Activated CD4-positive, alpha-beta T cell treated with anti-CD3 and anti-CD28 coated beads, Interleukin-2, amount 10 ng/mL, durations not matched to agents 7 days and 5 days (primary cell): ENCODE measurements at regions of chr11 and their contacts with region 1.

Region 1: DNA sequence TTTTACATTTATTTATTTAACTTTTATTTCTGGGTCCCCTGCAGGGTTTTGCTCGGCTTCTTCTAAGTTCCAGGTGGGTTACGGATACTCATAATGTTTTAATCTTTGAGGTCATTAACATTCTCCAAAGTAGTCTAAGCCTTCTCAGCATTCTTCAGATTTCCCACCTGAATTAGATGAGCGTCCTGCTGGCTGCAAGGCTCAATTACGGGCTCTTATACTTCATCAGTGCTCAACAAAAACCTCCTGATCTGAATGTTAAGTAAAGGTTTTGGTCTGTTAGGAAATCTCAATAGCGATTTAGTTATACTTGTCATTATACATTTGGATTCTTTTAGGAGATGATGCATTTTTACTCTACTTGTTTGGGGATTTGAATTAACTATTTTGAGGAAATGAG is 27.3 kb upstream of the NFRKB start:
- DNase-seq: no peak
- H3K4me3 Mint-ChIP-seq: no peak overlapping the region
- H3K27ac Mint-ChIP-seq: no peak overlapping the region
- H3K4me1 Mint-ChIP-seq: peaks cover 23% of the 10 kb centered on the region
- H3K27me3 Mint-ChIP-seq: no peaks in the 10 kb centered on the region

Region 2: DNA sequence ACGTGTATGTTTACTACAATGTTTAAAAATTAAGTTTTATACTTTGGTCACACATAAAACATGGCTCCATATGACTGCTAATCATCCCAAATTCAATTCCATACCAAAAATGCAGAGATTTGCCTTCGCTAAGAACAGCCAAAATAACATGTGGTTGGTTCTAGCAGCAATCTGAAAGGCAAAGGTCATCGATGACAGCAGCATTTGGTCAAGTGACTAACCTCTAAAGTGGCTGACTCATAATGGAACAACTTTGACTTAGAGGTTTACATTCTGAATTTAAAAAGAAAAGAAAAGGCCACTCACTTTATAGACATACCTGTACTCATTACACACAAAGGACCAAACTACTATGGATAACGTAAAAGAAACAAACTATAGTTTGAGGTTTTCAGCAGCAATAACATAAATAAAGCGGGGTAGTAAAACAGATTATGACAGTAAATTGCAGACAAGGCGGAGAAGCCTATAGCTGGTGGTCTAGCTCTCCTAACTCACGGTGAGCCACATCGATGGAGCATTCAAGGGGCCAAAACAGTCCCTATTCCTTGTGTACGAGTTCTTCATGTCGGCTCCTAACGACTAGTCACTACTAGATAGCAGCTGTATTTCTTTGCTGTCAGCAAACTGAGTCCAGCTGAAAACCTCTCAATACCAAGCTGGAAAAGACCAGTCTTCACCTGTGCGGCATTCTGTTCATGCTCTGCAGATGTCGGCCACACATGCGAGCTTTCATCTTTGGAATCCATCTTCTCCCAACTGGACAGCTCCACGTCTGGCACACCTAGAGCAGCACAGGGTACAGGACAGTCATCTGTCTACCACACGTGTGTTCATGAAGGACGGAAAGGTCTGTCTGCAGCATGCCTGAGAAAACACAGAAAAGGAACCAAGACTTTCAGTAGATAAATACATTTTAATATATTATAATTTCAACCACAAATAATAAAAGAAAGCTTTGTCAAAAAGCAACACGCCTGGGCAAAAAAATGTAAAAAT is 37.8 kb after region 1 on chr11:
- CTCF ChIA-PET with region 1: no interaction called
- POLR2A ChIA-PET with region 1: no interaction called
- DNase-seq: no peak
- H3K4me3 Mint-ChIP-seq: no peak overlapping the region
- H3K27ac Mint-ChIP-seq: no peak overlapping the region
- H3K4me1 Mint-ChIP-seq: peaks cover 11% of the 10 kb centered on the region
- H3K27me3 Mint-ChIP-seq: no peaks in the 10 kb centered on the region

Region 3: DNA sequence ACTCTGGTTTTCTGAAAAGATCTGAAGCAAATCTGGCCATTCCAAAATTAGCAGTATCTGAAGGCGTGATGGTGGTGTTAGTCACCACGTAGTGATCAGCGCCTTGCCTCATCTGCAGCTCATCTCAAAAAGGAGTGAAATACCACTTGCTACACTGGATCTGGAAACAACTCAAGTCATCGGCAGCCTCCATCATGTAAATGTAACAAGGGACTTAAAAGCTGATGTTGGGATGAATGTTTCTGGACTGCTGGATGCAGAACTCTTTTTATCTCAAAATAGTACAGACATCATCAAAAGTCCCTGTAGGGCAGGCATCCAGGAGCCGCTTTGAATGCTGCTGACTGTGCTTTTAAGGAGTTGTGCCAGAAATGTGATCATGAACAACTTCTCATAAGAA is 132.9 kb after region 1 on chr11:
- CTCF ChIA-PET with region 1: no interaction called
- POLR2A ChIA-PET with region 1: no interaction called
- DNase-seq: no peak
- H3K4me3 Mint-ChIP-seq: no peak overlapping the region
- H3K27ac Mint-ChIP-seq: no peak overlapping the region
- H3K4me1 Mint-ChIP-seq: no peaks in the 10 kb centered on the region
- H3K27me3 Mint-ChIP-seq: peaks cover 32% of the 10 kb centered on the region

Region 4: DNA sequence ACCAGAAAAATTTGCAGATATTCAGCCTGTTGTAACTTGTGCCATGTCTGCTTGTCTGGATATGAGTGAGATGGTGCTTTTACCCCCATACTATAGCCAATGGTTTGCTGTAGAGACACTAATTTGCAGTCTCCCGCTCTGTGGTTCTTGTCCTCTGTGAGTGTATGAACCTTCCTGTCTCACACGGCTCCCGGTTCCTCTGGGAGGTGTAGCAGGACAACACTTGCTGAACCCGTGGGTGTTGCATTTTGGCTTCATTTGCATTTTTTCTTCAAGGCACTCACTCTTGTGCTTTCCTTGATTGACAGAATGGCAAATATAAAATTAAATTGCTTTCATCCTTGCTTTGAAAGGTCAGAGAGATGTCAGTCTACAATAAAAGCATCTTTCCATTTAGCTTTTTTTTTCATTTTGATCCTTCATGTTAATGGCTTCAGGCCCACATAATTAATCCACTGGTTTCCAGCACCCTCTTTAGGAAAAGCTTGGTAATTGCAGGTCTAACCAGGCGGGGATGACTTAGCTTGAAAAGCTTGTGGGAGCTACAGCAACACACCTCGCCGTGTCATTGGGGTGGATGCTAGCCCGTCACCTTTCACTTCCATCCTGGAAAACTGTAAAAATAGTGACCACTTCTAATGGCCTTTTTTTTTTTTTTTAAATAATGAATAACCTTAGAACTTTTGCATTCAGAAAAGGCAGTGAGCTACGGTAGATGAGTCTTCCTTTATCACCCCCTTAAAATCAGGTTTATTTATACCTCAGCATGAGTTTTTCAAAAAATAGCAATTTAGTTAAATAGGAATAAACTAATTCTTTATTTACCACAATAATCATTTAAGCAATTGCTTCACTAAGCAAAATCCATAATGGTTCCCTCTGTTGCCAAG is 209.5 kb after region 1 on chr11:
- CTCF ChIA-PET with region 1: interaction called, 15 read pairs
- POLR2A ChIA-PET with region 1: no interaction called
- DNase-seq: peak; percentile 66
- H3K4me3 Mint-ChIP-seq: no peak overlapping the region
- H3K27ac Mint-ChIP-seq: no peak overlapping the region
- H3K4me1 Mint-ChIP-seq: no peaks in the 10 kb centered on the region
- H3K27me3 Mint-ChIP-seq: no peaks in the 10 kb centered on the region